ENCODE measurements at regions of chr2 and their contacts with region 1.

Region 1: GRCh38 chr2:228401065-228401912 is 219.8 kb upstream of the SPHKAP start:
- DNase-seq: peak; percentile 67
- ATAC-seq: peak; percentile 82
- H3K4me3 ChIP-seq: no peak overlapping the region
- H3K27ac ChIP-seq: no peak overlapping the region
- H3K4me1 ChIP-seq: no peaks in the 10 kb centered on the region
- H3K27me3 ChIP-seq: no peaks in the 10 kb centered on the region
- CTCF ChIP-seq: peak; percentile 87

Region 2: GRCh38 chr2:228545041-228545747 is 143.9 kb after region 1 on chr2:
- CTCF ChIA-PET with region 1: no interaction called
- POLR2A ChIA-PET with region 1: no interaction called
- intact Hi-C with region 1: loop called (anchors 5 kb)
- DNase-seq: peak; percentile 87
- ATAC-seq: peak; percentile 80
- H3K4me3 ChIP-seq: no peak overlapping the region
- H3K27ac ChIP-seq: peak overlapping the region; percentile 57
- H3K4me1 ChIP-seq: peaks cover 49% of the 10 kb centered on the region
- H3K27me3 ChIP-seq: no peaks in the 10 kb centered on the region
- CTCF ChIP-seq: no peak

Region 3: GRCh38 chr2:228681426-228681825 is 280.1 kb after region 1 on chr2:
- CTCF ChIA-PET with region 1: no interaction called
- POLR2A ChIA-PET with region 1: no interaction called
- intact Hi-C with region 1: no loop called
- DNase-seq: peak; percentile 66
- ATAC-seq: peak; percentile 61
- H3K4me3 ChIP-seq: no peak overlapping the region
- H3K27ac ChIP-seq: no peak overlapping the region
- H3K4me1 ChIP-seq: no peaks in the 10 kb centered on the region
- H3K27me3 ChIP-seq: 0 out of 2 replicates have a peak, but pooled peaks cover 8% of the 10 kb centered on the region
- CTCF ChIP-seq: peak; percentile 66

Measured in PC-3 (cell line).